Activated CD8-positive, alpha-beta memory T cell treated with anti-CD3 and anti-CD28 coated beads, Interleukin-2, amount 10 ng/mL, durations not matched to agents 7 days and 5 days (primary cell): ENCODE measurements at regions of chr17 and their contacts with region 1.

Region 1: GRCh38 chr17:7851438-7852256 is 3.2 kb upstream of the TMEM88 start:
- DNase-seq: peak; percentile 96
- ATAC-seq: peak; percentile 93
- H3K4me3 Mint-ChIP-seq: peak overlapping the region; percentile 89
- H3K27ac Mint-ChIP-seq: peak overlapping the region; percentile 66
- H3K4me1 Mint-ChIP-seq: peaks cover 48% of the 10 kb centered on the region
- H3K27me3 Mint-ChIP-seq: no peaks in the 10 kb centered on the region

Region 2: DNA sequence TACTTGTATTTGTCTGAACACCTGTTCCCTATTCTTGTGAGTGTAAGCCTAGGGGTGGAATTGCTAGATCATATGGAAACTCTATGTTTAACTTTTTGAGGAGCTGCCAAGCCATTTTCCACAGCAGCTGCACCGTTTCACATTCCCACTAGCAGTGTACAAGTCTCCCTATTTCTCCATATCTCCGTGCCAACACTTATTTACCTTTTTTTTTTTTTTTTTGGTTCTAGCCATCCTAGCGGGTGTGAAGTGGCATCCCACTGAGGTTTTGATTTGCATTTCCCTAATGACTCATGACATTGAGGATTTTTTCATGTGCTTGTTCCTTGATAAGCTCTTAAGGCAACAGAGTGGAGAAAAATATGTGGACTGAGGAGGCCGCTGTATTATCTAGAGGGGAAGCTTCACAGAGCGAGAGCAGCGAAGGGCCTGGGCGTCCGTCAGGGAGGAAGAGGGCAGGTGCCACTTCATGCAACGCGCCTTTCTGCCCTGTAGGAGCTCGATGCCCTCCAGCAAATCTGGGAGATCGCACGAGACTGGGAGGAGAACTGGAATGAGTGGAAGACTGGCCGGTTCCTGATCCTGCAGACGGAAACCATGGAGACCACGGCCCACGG is 84.1 kb before region 1 on chr17:
- CTCF ChIA-PET with region 1: no interaction called
- DNase-seq: no peak
- ATAC-seq: no peak
- H3K4me3 Mint-ChIP-seq: no peak overlapping the region
- H3K27ac Mint-ChIP-seq: no peak overlapping the region
- H3K4me1 Mint-ChIP-seq: no peaks in the 10 kb centered on the region
- H3K27me3 Mint-ChIP-seq: peaks cover 19% of the 10 kb centered on the region

Region 3: DNA sequence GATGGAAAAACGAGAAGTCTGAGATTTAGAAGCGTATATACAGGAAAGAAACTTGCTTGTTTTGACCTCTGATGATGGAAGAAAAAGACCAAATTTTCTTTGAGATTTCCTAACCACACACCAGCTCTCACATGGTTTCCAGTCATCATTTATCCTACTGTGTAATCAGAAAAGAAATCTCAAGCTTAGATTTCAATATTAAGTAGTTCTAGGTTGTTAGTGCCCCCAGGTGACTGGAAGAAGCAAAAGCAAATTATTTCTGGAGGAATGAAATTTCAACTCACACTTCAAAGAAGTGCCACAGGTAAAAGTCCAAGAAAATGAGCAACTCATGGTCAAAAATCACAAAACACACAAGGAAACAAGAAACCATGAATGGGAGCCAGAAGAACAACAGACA is 69.4 kb before region 1 on chr17:
- CTCF ChIA-PET with region 1: no interaction called
- DNase-seq: no peak
- ATAC-seq: no peak
- H3K4me3 Mint-ChIP-seq: no peak overlapping the region
- H3K27ac Mint-ChIP-seq: no peak overlapping the region
- H3K4me1 Mint-ChIP-seq: no peaks in the 10 kb centered on the region
- H3K27me3 Mint-ChIP-seq: peaks cover 5% of the 10 kb centered on the region

Region 4: GRCh38 chr17:7809086-7809790 is 42.4 kb before region 1 on chr17:
- CTCF ChIA-PET with region 1: no interaction called
- DNase-seq: no peak
- ATAC-seq: no peak
- H3K4me3 Mint-ChIP-seq: no peak overlapping the region
- H3K27ac Mint-ChIP-seq: no peak overlapping the region
- H3K4me1 Mint-ChIP-seq: no peaks in the 10 kb centered on the region
- H3K27me3 Mint-ChIP-seq: peaks cover 19% of the 10 kb centered on the region

Region 5: GRCh38 chr17:7834962-7835813 is 16.5 kb before region 1 on chr17:
- CTCF ChIA-PET with region 1: interaction called, 85 read pairs
- DNase-seq: peak; percentile 91
- ATAC-seq: peak; percentile 60
- H3K4me3 Mint-ChIP-seq: peak overlapping the region; percentile 77
- H3K27ac Mint-ChIP-seq: peak overlapping the region; percentile 84
- H3K4me1 Mint-ChIP-seq: peaks cover 49% of the 10 kb centered on the region
- H3K27me3 Mint-ChIP-seq: peaks cover 13% of the 10 kb centered on the region

Region 6: DNA sequence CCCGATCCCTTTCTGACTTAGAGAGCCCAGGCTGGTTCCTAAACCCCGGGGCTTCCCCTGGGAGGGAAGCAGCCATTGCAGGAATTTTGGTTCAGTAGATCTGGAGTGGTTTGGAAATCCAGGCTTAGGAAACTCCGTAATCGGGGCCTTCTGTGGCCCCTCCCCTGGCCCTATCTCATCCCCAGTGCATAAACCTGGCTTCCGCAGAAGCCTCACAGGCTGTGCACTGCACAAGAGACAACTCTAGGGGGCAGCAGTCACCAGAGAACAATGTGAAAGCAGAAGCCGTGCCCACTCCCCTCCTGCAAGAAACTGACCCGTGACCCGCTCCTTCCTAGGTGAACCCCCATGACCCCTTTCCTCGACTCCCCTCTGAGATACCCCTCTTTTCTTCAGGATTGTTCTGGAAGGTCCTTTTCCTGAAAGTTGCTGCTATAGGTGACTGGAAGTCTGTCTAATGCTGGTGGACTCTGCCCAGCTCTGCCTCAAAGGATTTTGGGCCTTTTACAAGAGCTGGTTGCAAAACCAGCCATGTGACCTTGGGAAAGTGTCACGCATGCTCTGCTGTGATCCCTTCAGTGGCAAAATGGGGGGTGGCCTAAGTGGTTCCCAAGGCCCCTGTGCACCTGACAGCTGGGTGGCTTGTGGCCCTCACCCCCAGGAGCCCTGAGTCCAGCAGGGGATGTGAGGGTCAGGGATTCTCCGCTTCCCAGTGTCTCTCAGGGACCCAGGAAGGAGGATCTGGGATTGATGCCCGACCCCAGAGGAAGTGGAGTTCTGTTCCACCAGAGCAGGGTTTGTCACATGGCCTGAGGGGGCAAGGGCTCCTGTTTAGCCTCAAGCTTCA is 165.2 kb after region 1 on chr17:
- CTCF ChIA-PET with region 1: no interaction called
- DNase-seq: peak; percentile 76
- ATAC-seq: peak; percentile 82
- H3K4me3 Mint-ChIP-seq: peak overlapping the region; percentile 49
- H3K27ac Mint-ChIP-seq: no peak overlapping the region
- H3K4me1 Mint-ChIP-seq: peaks cover 8% of the 10 kb centered on the region
- H3K27me3 Mint-ChIP-seq: peaks cover 39% of the 10 kb centered on the region